ENCODE measurements at regions of chr12 and their contacts with region 1.

Region 1: GRCh38 chr12:47870175-47870781 is 34.5 kb downstream of the VDR start:
- DNase-seq: peak; percentile 17 to 56
- H3K4me3 ChIP-seq: no peak overlapping the region
- H3K27ac ChIP-seq: no peak overlapping the region
- H3K4me1 ChIP-seq: no peaks in the 10 kb centered on the region
- H3K27me3 ChIP-seq: no peaks in the 10 kb centered on the region
- CTCF ChIP-seq: peak; percentile 74 to 80 (median 78)
- EP300 ChIP-seq: no peak
- POLR2A ChIP-seq: no peak
- RAD21 ChIP-seq: peak; percentile 55 to 68; a peak in 3 of 4 replicates

Region 2: DNA sequence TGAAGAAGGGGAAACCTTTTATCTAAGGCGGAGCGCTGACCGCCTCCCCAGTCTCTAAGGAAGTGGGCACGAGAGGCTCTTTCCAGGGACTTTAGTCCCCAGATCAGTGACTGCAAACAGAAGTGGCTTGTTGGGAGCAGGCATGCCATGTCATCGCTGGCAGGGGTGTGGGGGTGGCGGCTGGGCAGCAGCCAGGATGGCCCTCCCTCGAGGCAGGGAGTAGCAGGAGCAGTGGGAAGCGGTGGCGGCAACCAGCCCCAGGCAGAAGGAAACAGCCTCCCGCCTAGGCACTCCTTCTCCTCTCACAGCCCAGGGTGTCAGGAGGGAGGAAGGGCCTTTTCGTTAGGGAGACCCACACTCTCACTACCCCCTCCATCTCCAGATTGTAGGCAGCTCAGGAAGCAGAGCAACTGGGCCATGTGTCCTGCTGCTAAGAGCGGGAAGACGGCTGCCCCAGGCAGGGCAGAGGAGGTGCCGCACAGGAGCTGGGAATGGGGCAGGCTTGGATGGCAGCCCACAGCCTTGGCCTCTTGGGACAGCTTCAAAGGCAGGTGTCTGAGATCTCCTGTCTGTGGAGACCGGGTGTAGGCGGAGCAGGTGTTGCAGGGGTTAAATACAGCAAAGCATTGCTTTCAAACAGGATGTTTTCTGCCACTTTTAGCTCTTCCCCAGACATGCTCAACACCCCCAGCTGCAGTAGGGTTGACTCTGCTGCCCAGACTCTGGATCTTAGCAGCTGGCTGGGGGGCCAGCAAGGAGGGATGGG is 12.7 kb after region 1 on chr12:
- CTCF ChIA-PET with region 1: interaction called, 29 read pairs
- POLR2A ChIA-PET with region 1: interaction called, 3 read pairs
- DNase-seq: no peak
- H3K4me3 ChIP-seq: no peak overlapping the region
- H3K27ac ChIP-seq: no peak overlapping the region
- H3K4me1 ChIP-seq: peaks cover 0 to 5% (median 1%) of the 10 kb centered on the region in 4 experiments; a peak in 4 of 7 replicates
- H3K27me3 ChIP-seq: no peaks in the 10 kb centered on the region; a peak in 1 of 7 replicates
- CTCF ChIP-seq: no peak
- EP300 ChIP-seq: no peak
- POLR2A ChIP-seq: no peak
- RAD21 ChIP-seq: no peak

Region 3: DNA sequence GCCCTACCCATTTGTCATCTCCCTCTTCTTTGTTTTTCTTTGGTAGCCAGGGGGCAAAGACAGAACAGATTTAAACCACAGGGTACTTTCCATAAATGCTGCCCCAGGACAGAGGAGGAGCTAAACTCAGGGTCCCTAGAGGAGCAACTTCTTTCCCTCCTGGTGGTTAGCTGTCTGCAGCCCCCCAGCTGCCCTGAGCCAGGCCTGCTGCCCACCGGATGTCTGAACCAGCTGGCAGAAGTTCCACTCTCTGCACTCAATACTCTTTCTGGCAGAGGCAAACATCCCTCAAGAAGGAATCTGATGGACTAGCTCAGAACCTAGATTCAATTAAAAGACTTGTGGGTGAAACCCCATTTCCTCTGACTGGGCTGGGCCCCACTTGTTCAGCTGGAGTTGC is 23.8 kb after region 1 on chr12:
- CTCF ChIA-PET with region 1: interaction called, 15 read pairs
- POLR2A ChIA-PET with region 1: no interaction called
- DNase-seq: no peak
- H3K4me3 ChIP-seq: no peak overlapping the region
- H3K27ac ChIP-seq: no peak overlapping the region
- H3K4me1 ChIP-seq: no peaks in the 10 kb centered on the region
- H3K27me3 ChIP-seq: peaks cover 0 to 6% (median 3%) of the 10 kb centered on the region in 4 experiments; a peak in 3 of 7 replicates
- CTCF ChIP-seq: no peak
- EP300 ChIP-seq: no peak
- POLR2A ChIP-seq: no peak
- RAD21 ChIP-seq: no peak